HEK293 (cell line): ENCODE measurements at regions of chr2 and their contacts with region 1.

Region 1: DNA sequence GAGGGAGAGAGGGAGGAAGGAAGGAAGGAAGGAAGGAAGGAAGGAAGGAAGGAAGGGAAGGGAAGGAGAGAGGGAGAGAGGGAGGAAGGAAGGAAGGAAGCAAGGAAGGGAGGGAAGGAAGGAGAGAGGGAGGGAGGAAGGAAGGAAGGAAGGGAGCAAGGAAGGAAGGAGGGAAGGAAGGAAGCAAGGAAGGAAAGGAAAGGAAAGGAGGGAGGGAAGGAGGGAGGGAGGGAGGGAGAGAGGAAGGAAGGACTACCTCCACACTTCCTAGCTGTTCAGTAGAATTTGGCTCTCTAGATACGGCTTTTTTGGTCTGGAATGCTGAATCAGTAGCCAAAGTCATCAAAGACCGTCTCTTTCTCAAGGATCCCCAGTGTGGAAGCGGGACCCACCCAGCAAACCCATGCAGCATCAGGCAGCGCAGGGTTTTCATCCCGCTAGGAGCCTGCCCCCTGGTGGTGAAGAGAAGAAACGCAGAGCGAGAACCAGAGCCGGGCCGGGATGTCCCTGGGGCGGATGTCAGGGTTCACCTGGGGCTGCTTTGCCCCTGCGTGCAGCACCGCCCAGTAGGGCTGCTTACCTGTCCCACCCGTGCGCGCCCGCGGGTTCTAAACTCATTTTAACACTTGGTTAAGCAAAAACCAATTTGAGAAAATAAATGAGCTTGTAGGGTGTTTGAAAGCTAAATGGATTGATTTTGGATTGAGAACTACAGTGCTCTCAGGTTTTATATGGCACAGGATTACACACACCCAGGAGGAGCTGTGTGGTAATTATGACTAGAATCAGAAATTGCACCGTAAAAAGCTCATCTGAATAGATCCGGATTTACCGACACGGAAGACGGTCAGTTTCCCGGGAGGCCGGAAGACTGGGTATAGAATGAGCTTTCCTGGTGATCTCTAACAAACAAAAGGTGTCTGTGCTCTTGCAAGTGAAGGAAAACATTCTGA is 48.1 kb upstream of the ARL4C start:
- H3K4me3 ChIP-seq: no peak overlapping the region
- H3K27ac ChIP-seq: no peak overlapping the region
- H3K4me1 ChIP-seq: no peaks in the 10 kb centered on the region
- CTCF ChIP-seq: peak; percentile 73

Region 2: DNA sequence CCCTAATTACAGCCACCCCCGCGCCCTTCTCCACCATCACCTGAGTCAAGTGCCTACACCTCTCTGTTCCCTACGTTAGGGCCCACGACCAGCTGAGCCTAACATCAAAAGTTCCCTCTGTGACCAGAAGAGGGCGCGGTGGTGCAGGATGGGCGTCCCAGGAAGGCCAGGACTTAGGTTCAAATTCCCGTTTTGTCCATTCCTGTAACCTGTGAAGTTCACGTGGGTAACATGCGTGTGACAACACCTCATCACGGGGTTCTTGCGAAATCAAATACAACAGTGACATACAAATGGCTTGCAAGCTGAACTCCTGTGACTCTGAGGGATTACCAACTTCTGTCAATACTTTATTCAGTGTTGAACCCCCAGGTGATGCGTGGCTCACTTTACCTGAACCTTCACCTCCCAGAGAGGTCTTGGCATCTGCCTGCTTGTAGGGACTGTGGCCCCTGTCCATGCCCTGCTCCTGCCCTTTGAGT is 255.9 kb before region 1 on chr2:
- CTCF ChIA-PET with region 1: interaction called, 25 read pairs
- POLR2A ChIA-PET with region 1: no interaction called
- H3K4me3 ChIP-seq: no peak overlapping the region
- H3K27ac ChIP-seq: no peak overlapping the region
- H3K4me1 ChIP-seq: no peaks in the 10 kb centered on the region
- CTCF ChIP-seq: peak; percentile 69

Region 3: GRCh38 chr2:234533626-234534025 is 11.3 kb before region 1 on chr2:
- CTCF ChIA-PET with region 1: interaction called, 11 read pairs
- POLR2A ChIA-PET with region 1: no interaction called
- H3K4me3 ChIP-seq: no peak overlapping the region
- H3K27ac ChIP-seq: no peak overlapping the region
- H3K4me1 ChIP-seq: no peaks in the 10 kb centered on the region
- CTCF ChIP-seq: no peak

Region 4: DNA sequence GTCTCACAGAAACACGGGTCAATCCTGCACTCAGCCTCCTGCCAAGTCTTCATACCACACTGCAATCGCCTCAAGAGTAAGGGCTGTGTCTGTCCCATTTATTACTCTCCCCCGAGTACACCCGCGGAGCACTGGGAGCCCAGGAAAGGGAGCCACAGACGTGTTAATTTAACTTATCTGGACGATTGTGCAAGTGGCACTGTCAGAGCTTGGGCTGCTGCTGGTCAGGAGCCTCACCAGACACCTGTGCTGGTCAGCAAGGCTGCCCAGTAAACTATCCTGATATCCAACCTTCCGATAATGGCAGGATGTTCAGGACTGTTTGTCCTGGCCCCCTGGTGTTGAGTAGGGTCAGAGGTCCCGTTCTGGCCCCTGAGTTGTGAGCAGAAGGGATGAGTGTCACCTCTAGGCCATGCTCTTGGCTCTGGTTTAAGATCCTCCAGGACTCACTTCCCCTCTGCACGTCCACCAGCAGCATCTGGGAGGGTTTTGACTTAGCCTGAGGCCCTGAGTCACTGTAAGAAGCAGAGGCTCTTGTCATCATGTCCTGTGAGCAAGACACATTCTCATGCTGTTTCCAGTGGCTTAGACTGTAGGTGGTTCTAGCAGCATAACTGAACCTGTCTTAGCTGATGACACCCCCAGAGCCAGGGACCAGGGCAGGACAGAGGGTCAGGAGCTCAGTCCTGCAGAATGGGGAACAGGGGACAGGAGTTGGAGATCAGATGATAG is 34.5 kb after region 1 on chr2:
- CTCF ChIA-PET with region 1: no interaction called
- POLR2A ChIA-PET with region 1: no interaction called
- H3K4me3 ChIP-seq: no peak overlapping the region
- H3K27ac ChIP-seq: no peak overlapping the region
- H3K4me1 ChIP-seq: no peaks in the 10 kb centered on the region
- CTCF ChIP-seq: no peak

Region 5: GRCh38 chr2:234747032-234747431 is 202.1 kb after region 1 on chr2:
- CTCF ChIA-PET with region 1: no interaction called
- POLR2A ChIA-PET with region 1: no interaction called
- H3K4me3 ChIP-seq: no peak overlapping the region
- H3K27ac ChIP-seq: no peak overlapping the region
- H3K4me1 ChIP-seq: no peaks in the 10 kb centered on the region
- CTCF ChIP-seq: no peak

Region 6: GRCh38 chr2:234989183-234989701 is 444.3 kb after region 1 on chr2:
- CTCF ChIA-PET with region 1: no interaction called
- POLR2A ChIA-PET with region 1: no interaction called
- H3K4me3 ChIP-seq: no peak overlapping the region
- H3K27ac ChIP-seq: no peak overlapping the region
- H3K4me1 ChIP-seq: no peaks in the 10 kb centered on the region
- CTCF ChIP-seq: no peak

Region 7: DNA sequence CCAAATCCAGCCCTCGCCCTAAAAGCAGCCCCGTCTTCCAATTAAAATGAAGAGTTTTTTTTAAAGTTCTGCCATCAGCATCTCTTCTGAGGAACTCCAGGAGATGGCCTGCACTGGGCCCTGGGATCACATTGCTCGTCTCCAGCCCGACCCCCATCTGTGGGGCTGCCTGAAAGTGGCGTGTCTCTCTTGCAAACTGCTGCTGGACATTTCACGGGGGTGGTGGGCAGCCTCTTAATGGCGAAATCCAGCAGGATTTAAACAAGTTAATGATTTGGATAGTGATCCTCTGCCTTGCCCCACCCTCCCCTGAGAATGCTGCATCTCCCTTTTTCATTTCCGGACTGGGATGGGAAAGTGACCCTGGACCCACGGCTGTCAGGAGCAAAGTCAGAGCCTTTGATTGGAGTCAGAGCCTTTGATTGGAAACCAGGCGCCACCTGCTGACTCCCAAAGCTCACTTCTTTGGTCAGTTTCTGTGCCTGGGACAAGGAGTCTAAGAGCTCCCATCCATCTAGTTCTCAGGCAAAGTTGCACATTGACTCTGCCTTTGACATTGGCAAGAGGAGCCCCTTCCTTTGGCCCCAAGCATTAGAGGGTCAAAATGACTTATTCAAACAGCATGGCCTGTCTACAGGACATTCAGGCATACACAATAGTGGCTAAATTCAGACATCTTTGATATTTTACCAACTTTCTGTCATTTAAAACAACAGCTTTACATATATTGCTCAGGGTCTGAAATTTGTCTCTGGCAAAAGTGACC is 562.1 kb after region 1 on chr2:
- CTCF ChIA-PET with region 1: interaction called, 16 read pairs
- POLR2A ChIA-PET with region 1: no interaction called
- H3K4me3 ChIP-seq: no peak overlapping the region
- H3K27ac ChIP-seq: no peak overlapping the region
- H3K4me1 ChIP-seq: no peaks in the 10 kb centered on the region
- CTCF ChIP-seq: peak; percentile 73